Thyroid gland (tissue), 4 donors: ENCODE measurements at regions of chr12 and their contacts with region 1.

Region 1: GRCh38 chr12:575948-576612 is 87.2 kb downstream of the NINJ2 start:
- DNase-seq: peak; percentile 67 to 71
- H3K4me3 ChIP-seq: no peak overlapping the region
- H3K27ac ChIP-seq: peak overlapping the region in 1 of 3 donors; percentile 26
- H3K4me1 ChIP-seq: peaks cover 0 to 25% of the 10 kb centered on the region in 2 donors
- H3K27me3 ChIP-seq: no peaks in the 10 kb centered on the region
- CTCF ChIP-seq: peak; percentile 83 to 100 (median 98)
- POLR2A ChIP-seq: no peak

Region 2: DNA sequence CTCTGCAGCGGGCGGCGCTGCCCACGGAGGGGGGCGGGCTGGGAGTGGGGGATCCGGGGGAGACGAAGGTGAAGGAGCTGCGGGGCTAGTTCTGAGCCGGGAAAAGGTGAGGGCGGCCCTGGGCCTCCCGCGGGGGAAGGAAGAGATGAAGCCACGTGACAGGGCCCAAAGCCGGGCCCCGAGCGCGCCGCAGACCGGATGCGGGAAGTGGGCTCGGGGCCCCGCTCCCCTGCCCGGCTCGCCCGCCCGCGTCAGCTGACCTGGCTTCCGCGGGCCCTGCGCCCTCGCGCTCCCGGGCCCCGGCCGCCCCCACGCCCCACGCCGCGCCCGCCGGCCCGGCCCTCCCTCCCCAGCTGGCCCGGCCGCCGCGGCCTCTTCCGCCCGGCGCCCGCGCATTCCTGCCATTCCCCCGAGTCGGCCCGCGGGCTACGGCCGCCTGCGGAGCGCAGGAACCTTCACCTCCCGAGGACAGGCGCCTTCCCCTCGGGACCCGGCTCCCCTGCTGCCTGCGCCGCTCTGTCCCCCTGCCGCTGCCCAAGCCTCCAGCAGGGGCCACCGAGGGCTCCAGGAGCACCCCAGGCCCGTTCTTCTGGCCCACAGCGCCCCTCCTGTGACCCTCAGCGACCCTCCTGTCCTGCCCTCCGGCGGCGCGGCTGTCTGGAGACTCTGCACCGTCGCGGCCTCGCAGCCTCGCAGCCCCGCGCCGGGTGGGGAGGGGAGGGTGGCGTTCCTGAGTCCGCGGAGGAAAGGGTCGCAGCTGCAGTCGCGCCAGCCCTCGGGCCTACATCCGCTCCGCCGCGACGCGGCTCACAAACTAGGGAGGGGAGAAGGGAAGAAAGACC is 66.8 kb after region 1 on chr12:
- intact Hi-C with region 1: loop called (anchors 5 kb)
- DNase-seq: peak; percentile 81 to 83
- H3K4me3 ChIP-seq: peak overlapping the region in 2 of 3 donors; percentile 6 to 45
- H3K27ac ChIP-seq: peak overlapping the region; percentile 93 to 99 (median 99)
- H3K4me1 ChIP-seq: peaks cover 30 to 43% of the 10 kb centered on the region in 2 donors
- H3K27me3 ChIP-seq: no peaks in the 10 kb centered on the region
- CTCF ChIP-seq: peak in 5 of 6 experiments; percentile 5 to 41 (median 10)
- POLR2A ChIP-seq: peak in 1 of 2 donors; percentile 61

Region 3: DNA sequence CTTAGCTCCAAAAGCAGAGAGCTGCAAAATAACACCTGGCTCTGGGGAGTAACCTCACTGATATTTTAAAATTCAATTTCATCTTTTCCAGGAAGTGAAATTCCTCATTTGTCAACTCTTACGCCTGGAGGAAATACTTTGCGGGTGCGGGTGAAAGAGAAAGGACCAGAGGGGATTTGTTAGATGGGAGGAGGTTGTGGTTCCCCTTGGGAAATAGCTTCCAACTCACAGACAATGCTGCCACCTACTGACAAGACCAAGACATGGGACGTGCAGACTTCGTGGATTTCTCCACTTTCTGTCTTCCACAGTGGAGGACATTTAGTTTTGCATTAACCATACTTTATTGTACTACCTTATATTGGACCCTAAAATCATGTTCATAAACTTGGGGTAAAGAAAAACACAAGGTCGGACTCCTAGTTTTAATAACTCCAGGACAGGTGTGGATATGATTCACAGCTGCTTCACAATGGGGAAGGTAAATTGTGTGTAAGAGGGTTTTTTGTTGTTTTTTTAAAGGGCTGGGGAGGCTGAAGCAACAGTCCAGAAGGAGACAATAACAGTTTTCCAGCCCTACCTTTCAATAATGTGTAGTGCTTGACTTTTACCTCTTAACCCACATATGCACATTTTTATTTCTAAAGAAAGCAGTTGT is 1007.5 kb after region 1 on chr12:
- intact Hi-C with region 1: loop called (anchors 10 kb)
- DNase-seq: peak; percentile 60 to 70
- H3K4me3 ChIP-seq: no peak overlapping the region
- H3K27ac ChIP-seq: no peak overlapping the region
- H3K4me1 ChIP-seq: peaks cover 7 to 10% of the 10 kb centered on the region in 2 donors
- H3K27me3 ChIP-seq: no peaks in the 10 kb centered on the region
- CTCF ChIP-seq: peak; percentile 73 to 93 (median 85)
- POLR2A ChIP-seq: no peak